Heart right ventricle (tissue), 16 donors: ENCODE measurements at regions of chr13 and their contacts with region 1.

Region 1: DNA sequence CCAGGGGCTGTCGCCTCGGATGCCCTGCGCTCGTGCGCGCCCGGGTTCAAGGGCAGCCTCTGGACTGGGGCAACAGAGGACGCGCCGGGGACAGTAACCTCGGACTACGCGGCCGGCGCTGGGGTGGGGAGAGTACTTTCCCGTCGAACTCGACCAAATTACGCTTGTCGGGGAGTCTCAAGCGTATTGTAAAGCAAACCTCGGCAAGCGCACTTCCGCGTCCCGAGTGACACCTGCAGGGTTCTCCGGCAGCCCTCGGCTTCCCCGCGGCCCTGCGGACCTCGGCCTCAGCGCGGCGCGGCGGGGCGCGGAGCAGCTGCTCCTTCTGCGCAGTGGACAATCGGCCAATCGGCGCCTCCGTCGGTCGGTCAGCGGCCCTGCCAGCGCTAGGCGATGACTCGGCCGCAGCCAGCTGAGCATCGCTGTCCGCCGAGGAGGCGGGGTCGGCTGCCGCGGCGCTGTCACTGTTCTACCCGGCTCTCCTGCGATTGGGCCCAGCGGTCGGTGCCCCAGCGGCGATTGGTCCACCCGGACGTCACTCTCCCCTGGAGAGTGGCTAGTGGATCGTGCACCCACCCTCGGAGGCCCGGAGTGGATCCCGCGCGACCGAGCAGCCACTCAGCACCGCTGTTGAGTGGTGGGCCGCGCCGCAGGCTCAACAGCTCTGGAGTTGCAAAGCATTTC is at the start of gene SLC46A3:
- DNase-seq: peak; percentile 100
- ATAC-seq: peak; percentile 97 to 99 (median 98)
- H3K4me3 ChIP-seq: peak within 1 kb of the TSS; percentile 57 to 94 (median 76)
- H3K27ac ChIP-seq: peak within 1 kb of the TSS; percentile 92 to 100 (median 99)
- H3K4me1 ChIP-seq: peaks cover 6 to 51% (median 39%) of the 10 kb centered on the region in 9 donors
- H3K27me3 ChIP-seq: no peaks in the 10 kb centered on the region
- CTCF ChIP-seq: peak in 4 of 9 donors; percentile 15 to 41 (median 30)
- total RNA-seq, gene SLC46A3: 9.1 to 19.3 (median 13.0) TPM

Region 2: GRCh38 chr13:28658796-28659620 is 59.7 kb before region 1 on chr13 and contains the start of gene POMP:
- intact Hi-C with region 1: loop called in 4 of 10 experiments (anchors 2 to 10 kb)
- DNase-seq: peak; percentile 96
- ATAC-seq: peak; percentile 96 to 99 (median 98)
- H3K4me3 ChIP-seq: peak within 1 kb of the TSS; percentile 74 to 95 (median 89)
- H3K27ac ChIP-seq: peak within 1 kb of the TSS; percentile 83 to 99 (median 98)
- H3K4me1 ChIP-seq: peaks cover 11 to 72% (median 51%) of the 10 kb centered on the region in 9 donors
- H3K27me3 ChIP-seq: no peaks in the 10 kb centered on the region
- CTCF ChIP-seq: no peak
- total RNA-seq, gene POMP: 91.7 to 120 (median 101) TPM

Region 3: DNA sequence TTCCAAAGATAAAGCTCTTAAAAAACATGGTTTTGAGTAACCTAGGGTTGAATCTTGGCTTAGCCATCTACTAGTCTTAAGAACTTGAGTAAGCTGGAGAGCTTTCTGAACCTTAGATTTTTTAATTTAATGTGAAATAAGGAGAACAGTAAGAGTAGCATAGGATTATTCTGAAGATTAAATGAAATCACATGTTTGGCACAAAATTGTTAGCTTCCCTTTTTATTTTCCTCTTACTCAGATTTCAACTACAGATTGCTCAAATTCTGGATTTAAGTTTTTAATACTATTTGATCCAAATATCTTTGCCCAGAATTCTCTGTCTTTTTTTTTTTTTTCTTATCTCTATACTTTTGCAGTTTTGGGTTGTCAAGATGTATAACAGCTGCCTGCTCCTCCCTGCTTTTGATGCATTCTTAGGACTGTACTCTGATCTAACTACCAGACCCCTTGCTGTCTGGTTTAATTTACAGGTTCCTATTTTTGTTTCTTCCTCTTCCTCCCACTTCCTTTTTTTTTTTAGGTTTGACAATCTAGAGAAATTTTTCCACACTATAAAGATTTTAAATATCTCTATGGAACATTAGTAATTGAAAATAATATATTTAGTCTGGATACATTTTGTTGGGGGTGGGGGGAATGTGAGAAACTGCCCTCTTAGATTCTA is 47.4 kb before region 1 on chr13:
- intact Hi-C with region 1: loop called in 2 of 10 experiments (anchors 5 to 10 kb)
- DNase-seq: no peak
- ATAC-seq: no peak
- H3K4me3 ChIP-seq: no peak overlapping the region
- H3K27ac ChIP-seq: peak overlapping the region in 1 of 10 donors; percentile 67
- H3K4me1 ChIP-seq: peaks cover 0 to 37% (median 7%) of the 10 kb centered on the region in 9 donors
- H3K27me3 ChIP-seq: no peaks in the 10 kb centered on the region
- CTCF ChIP-seq: no peak

Region 4: DNA sequence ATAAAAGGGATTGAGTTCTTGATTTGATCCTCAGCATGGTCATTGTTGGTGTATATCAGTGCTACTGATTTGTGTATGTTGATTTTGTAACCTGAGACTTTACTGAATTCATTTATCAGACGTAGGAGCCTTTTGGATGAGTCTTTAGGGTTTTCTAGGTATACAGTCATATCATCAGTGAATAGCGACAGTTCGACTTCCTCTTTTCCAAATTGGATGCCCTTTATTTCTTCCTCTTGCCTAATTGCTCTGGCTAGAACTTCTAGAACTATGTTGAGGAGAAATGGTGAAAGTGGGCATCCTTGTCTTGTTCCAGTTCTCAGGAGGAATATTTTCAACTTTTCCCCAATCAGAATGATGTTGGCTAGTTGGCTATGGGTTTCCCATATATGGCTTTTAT is 32.8 kb before region 1 on chr13:
- intact Hi-C with region 1: no loop called
- DNase-seq: no peak
- ATAC-seq: no peak
- H3K4me3 ChIP-seq: no peak overlapping the region
- H3K27ac ChIP-seq: no peak overlapping the region
- H3K4me1 ChIP-seq: no peaks in the 10 kb centered on the region
- H3K27me3 ChIP-seq: no peaks in the 10 kb centered on the region
- CTCF ChIP-seq: no peak

Region 5: DNA sequence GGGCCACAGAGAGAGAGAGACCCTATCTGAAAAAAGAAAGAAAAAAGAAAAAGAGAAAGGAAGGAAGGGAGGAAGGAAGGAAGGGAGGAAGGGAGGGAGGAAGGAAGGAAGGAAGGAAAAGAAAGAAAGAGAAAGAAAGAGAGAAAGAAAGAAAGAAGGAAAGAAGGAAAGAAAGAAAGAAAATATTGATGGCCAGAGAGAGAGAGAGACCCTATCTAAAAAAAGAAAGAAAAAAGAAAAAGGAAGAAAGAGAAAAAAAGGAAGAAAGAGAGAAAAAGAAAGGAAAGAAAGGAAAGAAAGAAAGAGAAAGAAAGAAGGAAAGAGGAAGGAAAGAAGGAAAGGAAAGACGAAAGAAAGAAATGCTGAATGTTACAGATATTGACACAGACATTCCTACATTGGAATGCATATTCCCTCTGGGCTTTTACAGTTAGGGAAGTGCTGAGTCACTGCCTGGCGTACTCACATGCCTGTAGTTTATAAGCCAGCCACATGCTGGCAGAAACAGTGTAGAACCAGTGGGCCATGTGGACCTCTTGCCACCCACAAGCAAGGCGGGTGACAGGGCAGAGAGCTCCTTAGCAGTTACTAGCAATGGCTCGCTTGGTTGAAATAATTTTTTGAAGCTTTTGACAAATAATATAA is 34.7 kb after region 1 on chr13:
- intact Hi-C with region 1: loop called in 4 of 10 experiments (anchors 1 to 5 kb)
- DNase-seq: peak; percentile 21 to 54
- ATAC-seq: peak; percentile 60 to 86 (median 72)
- H3K4me3 ChIP-seq: no peak overlapping the region
- H3K27ac ChIP-seq: peak overlapping the region in 9 of 10 donors; percentile 74 to 89 (median 83)
- H3K4me1 ChIP-seq: peaks cover 0 to 52% (median 24%) of the 10 kb centered on the region in 9 donors
- H3K27me3 ChIP-seq: no peaks in the 10 kb centered on the region
- CTCF ChIP-seq: peak in 1 of 9 donors; percentile 14

Region 6: DNA sequence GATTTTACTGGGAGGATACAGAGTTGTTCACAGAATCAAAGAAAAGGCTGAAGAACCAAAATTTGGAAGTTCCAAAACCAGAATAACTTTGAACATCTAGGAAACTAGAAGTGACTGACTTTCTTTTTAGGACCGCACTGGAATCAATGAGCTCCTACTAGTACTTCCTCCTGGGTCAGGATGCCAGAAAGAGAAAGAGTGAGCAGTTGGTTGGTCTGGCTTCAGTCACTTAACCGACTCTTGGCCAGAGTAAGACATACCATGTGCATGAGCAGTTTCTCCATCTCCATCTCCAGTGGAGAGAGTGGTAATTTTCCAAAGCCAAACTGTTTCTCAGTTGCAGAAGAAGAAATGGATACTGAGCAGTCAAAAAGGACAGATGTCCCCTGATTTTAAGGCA is 74.3 kb after region 1 on chr13:
- intact Hi-C with region 1: loop called in 3 of 10 experiments (anchors 2 to 10 kb)
- DNase-seq: no peak
- ATAC-seq: peak in 2 of 8 donors; percentile 43 to 62
- H3K4me3 ChIP-seq: no peak overlapping the region
- H3K27ac ChIP-seq: no peak overlapping the region
- H3K4me1 ChIP-seq: peaks cover 0 to 8% (median 0%) of the 10 kb centered on the region in 9 donors
- H3K27me3 ChIP-seq: peaks cover 0 to 50% (median 13%) of the 10 kb centered on the region in 7 donors
- CTCF ChIP-seq: no peak

Region 7: DNA sequence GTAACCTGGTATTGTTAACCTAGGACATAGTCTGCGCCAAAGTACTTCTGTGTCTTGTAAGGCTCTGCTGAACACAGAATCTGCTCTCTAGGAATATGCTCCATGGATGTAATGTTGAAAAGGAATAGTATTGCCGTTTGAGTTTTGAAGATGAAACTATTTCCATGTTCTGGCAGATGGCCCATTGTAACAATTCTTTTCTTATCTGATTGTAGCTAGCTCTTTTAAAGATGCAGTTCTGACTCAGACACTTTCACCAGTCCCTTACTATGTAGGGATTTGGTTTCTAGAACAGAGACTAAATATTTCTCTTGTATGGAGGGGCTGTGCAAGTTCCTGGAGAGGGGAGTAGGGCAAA is 287.1 kb after region 1 on chr13:
- intact Hi-C with region 1: no loop called
- DNase-seq: no peak
- ATAC-seq: peak in 1 of 8 donors; percentile 20
- H3K4me3 ChIP-seq: no peak overlapping the region
- H3K27ac ChIP-seq: no peak overlapping the region
- H3K4me1 ChIP-seq: peaks cover 0 to 20% (median 5%) of the 10 kb centered on the region in 9 donors
- H3K27me3 ChIP-seq: no peaks in the 10 kb centered on the region
- CTCF ChIP-seq: no peak